ENCODE measurements at regions of chr3 and their contacts with region 1.

Region 1: DNA sequence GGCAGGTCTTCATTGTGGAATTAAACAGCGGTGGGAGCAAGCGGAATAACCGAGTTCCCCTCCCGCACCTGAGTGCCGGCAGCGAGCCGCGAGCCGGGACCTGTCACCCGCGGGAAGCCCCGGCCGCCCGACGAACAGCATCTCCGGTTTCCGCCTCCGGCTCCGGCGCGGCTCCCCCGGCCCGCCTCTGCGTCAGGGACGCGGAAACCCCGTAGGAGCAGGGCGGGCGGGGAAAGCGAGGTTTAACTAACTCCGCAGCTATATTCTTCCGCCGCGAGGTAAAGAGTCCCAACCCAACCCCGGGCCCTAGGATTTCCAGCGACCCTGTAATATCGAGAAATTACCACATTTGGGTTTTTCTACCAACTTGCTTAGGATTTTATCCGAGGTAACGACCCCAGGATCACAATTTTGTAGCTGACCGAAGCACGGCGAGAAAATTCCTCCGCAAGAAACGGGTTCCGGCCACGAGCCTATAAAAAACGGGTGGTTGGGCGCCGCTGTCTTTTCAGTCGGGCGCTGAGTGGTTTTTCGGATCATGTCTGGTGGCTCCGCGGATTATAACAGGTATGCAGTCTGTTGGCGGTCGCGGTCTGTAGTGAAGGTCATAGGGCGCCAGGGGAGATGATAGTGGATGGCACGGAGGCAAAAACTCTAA is at the start of gene EIF4A2:
- DNase-seq: peak; percentile 88
- H3K4me3 ChIP-seq: peak within 1 kb of the TSS; percentile 66 to 81 (median 77)
- H3K27ac ChIP-seq: peak within 1 kb of the TSS; percentile 96
- H3K4me1 ChIP-seq: peaks cover 24% of the 10 kb centered on the region
- H3K27me3 ChIP-seq: no peaks in the 10 kb centered on the region
- CTCF ChIP-seq: no peak
- total RNA-seq, gene EIF4A2: 291 to 441 TPM

Region 2: DNA sequence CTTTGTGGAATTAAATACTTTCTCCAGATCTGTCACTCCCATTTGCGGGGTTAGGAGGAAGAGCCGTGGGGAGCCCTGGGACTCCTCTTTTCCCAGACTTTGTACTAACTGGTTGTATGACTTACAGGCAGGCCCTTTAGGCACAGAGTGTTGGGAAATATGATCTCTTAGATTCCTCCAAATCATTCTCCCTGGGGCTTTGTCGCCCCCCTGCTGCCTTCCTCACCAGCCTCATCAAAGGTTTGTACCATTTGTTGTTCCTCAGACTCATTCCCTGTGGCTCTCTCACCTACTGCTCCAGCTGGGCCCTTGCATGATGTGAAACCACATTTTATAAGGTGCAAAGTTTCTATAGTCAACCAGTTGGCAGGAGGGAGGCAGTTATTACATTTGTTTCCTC is 295.4 kb before region 1 on chr3:
- CTCF ChIA-PET with region 1: no interaction called
- dilution Hi-C with region 1: no loop called
- in situ Hi-C with region 1: no loop called
- intact Hi-C with region 1: no loop called
- DNase-seq: no peak
- H3K4me3 ChIP-seq: no peak overlapping the region
- H3K27ac ChIP-seq: no peak overlapping the region
- H3K4me1 ChIP-seq: no peaks in the 10 kb centered on the region
- H3K27me3 ChIP-seq: no peaks in the 10 kb centered on the region
- CTCF ChIP-seq: no peak

Region 3: DNA sequence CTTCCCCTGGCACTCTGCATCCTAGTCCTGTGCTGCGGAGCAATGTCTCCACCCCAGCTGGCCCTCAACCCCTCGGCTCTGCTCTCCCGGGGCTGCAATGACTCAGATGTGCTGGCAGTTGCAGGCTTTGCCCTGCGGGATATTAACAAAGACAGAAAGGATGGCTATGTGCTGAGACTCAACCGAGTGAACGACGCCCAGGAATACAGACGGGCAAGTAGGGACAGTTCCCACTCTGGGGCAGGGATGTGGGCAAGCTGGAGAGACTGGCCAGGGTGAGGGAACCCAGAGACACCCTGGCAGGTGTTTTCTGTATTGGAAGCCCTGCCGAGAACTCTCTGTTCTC is 142.8 kb before region 1 on chr3:
- CTCF ChIA-PET with region 1: no interaction called
- dilution Hi-C with region 1: no loop called
- in situ Hi-C with region 1: loop called in 1 of 2 experiments (anchors 10 kb)
- intact Hi-C with region 1: no loop called
- DNase-seq: peak; percentile 98
- H3K4me3 ChIP-seq: no peak overlapping the region
- H3K27ac ChIP-seq: peak overlapping the region; percentile 53
- H3K4me1 ChIP-seq: peaks cover 65% of the 10 kb centered on the region
- H3K27me3 ChIP-seq: no peaks in the 10 kb centered on the region
- CTCF ChIP-seq: no peak

Region 4: DNA sequence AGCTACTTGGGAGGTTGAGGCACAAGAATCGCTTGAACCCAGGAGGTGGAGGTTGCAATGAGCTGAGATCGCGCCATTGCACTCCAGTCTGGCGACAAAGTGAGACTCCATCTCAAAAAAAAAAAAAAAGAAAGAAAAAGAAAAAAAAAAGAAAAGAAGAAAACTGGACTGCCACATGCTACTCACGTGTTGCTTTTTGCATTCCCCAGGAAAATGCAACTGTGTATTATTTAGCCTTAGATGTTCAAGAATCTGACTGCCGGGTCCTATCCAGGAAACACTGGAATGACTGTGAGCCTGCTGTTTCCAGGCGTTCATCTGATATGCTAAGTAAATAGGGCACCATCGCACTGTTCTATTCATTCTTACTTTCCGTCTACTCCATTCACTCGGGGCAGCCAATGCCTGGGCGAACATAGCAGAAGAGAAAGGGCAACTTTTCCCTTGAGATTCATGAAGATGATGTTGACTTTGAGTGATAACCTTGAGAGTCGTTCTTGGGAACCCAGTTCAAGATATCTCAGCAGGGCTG is 96.0 kb before region 1 on chr3:
- CTCF ChIA-PET with region 1: no interaction called
- dilution Hi-C with region 1: loop called (anchors 5 kb)
- in situ Hi-C with region 1: no loop called
- intact Hi-C with region 1: no loop called
- DNase-seq: no peak
- H3K4me3 ChIP-seq: no peak overlapping the region
- H3K27ac ChIP-seq: no peak overlapping the region
- H3K4me1 ChIP-seq: peaks cover 13% of the 10 kb centered on the region
- H3K27me3 ChIP-seq: no peaks in the 10 kb centered on the region
- CTCF ChIP-seq: no peak

Region 5: GRCh38 chr3:186754006-186754405 is 29.2 kb before region 1 on chr3:
- CTCF ChIA-PET with region 1: no interaction called
- dilution Hi-C with region 1: no loop called
- in situ Hi-C with region 1: no loop called
- intact Hi-C with region 1: loop called (anchors 1 kb)
- DNase-seq: no peak
- H3K4me3 ChIP-seq: no peak overlapping the region
- H3K27ac ChIP-seq: peak overlapping the region; percentile 83
- H3K4me1 ChIP-seq: peaks cover 15% of the 10 kb centered on the region
- H3K27me3 ChIP-seq: no peaks in the 10 kb centered on the region
- CTCF ChIP-seq: no peak

Measured in mammary epithelial cell (primary cell).